ENCODE measurements at regions of chr4 and their contacts with region 1.

Region 1: DNA sequence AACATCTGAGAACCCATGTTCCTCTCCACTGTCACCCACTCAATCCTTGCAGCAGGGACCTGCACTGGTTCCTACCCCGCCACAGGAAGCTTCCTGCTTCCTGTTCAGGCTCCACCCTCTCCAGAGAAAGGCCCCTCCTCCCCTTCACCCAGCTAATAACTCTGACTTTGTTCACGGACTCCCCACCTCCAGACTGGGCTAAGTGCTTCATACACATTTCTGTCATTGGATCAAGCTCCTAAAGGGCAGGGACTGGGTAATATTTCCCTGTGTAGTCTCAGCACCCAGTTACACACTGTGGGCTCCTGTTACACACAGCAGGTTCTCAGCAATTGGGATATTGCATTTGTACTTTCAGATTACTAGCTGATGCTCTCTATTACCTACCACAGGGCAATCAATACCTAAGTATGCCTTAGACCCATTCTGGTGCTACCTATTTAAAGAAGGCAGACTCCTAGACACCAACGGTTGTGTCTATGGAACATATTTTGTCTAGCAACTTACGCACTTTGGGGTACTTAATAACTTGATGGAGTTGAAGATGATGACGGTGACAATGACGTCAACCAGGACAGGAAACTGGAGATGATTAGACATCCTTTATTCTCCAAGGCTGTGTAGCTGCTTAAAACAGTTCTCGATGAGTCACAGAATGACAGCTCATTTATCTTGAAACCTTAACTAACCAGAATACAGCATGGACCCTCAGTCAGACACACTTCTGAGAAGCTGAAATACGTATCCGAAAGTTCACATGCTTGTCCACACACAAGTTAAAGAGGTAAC is 58.1 kb downstream of the MAML3 start:
- DNase-seq: no peak
- H3K4me3 ChIP-seq: no peak overlapping the region
- H3K27ac ChIP-seq: peak overlapping the region; percentile 70 to 77
- H3K4me1 ChIP-seq: peaks cover 21% of the 10 kb centered on the region
- H3K27me3 ChIP-seq: no peaks in the 10 kb centered on the region
- CTCF ChIP-seq: no peak
- POLR2A ChIP-seq: no peak

Region 2: DNA sequence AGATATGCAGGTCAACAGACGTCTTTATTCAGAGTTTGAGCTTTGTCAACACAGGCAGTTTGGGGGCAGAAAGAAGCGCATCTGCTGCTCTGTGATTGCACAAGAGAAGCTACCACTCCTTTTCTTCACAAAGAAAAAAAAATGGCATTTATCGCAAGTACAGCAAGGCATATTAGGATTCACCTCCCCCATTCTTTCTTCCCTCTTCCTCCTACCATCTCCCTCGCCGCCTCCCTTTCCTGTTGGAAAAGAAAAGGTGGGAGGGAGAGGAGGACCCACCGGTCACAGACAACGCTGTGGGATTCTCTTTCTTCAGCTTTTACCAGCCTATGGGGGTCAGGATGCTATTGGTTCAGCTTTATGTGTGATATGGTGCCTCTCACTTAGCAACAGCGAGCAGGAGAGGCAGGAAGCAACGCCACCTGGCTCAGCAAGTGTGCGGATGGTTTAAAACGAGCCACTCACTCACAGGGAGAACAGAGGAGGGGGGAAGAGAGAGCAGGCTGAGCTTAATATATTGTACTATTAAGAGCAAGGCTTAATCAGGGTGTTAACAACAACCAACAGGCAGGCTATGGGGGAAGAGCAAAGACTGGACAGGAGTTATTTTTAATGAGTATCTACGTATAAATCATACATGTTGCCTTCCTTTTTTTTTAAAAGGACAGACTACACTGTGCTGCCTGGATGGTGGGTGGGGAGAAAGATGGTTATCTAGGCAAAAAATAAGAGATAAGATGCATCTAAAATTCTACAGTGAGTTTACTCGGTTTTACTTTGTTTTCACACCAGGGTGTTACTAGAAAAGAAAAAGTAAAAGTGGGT is 46.7 kb before region 1 on chr4:
- intact Hi-C with region 1: loop called (anchors 5 kb)
- DNase-seq: peak; percentile 71
- H3K4me3 ChIP-seq: peak overlapping the region; percentile 22 to 24
- H3K27ac ChIP-seq: peak overlapping the region; percentile 69 to 78
- H3K4me1 ChIP-seq: no peaks in the 10 kb centered on the region
- H3K27me3 ChIP-seq: no peaks in the 10 kb centered on the region
- CTCF ChIP-seq: peak in 3 of 4 experiments; percentile 37 to 50 (median 37)
- POLR2A ChIP-seq: no peak